Heart right ventricle (tissue), 16 donors: ENCODE measurements at regions of chr5 and their contacts with region 1.

Region 1: GRCh38 chr5:68369457-68370125 is 154.0 kb downstream of the PIK3R1 start:
- DNase-seq: no peak
- ATAC-seq: no peak
- H3K4me3 ChIP-seq: no peak overlapping the region
- H3K27ac ChIP-seq: peak overlapping the region in 1 of 10 donors; percentile 22
- H3K4me1 ChIP-seq: peaks cover 0 to 25% (median 0%) of the 10 kb centered on the region in 9 donors
- H3K27me3 ChIP-seq: no peaks in the 10 kb centered on the region
- CTCF ChIP-seq: no peak

Region 2: GRCh38 chr5:68137511-68138140 is 232.0 kb before region 1 on chr5:
- intact Hi-C with region 1: loop called in 1 of 10 experiments (anchors 5 kb)
- DNase-seq: no peak
- ATAC-seq: peak in 3 of 8 donors; percentile 55 to 75 (median 64)
- H3K4me3 ChIP-seq: no peak overlapping the region
- H3K27ac ChIP-seq: peak overlapping the region in 8 of 10 donors; percentile 6 to 57 (median 34)
- H3K4me1 ChIP-seq: peaks cover 0 to 9% (median 3%) of the 10 kb centered on the region in 9 donors
- H3K27me3 ChIP-seq: no peaks in the 10 kb centered on the region
- CTCF ChIP-seq: no peak